Heart right ventricle (tissue), 16 donors: ENCODE measurements at regions of chr22 and their contacts with region 1.

Region 1: GRCh38 chr22:44080936-44081861 is 57.1 kb downstream of the PARVB start:
- DNase-seq: peak; percentile 68 to 73
- ATAC-seq: peak in 3 of 8 donors; percentile 30 to 51 (median 33)
- H3K4me3 ChIP-seq: no peak overlapping the region
- H3K27ac ChIP-seq: no peak overlapping the region
- H3K4me1 ChIP-seq: peaks cover 0 to 29% (median 4%) of the 10 kb centered on the region in 9 donors
- H3K27me3 ChIP-seq: no peaks in the 10 kb centered on the region
- CTCF ChIP-seq: peak; percentile 71 to 90 (median 88)

Region 2: DNA sequence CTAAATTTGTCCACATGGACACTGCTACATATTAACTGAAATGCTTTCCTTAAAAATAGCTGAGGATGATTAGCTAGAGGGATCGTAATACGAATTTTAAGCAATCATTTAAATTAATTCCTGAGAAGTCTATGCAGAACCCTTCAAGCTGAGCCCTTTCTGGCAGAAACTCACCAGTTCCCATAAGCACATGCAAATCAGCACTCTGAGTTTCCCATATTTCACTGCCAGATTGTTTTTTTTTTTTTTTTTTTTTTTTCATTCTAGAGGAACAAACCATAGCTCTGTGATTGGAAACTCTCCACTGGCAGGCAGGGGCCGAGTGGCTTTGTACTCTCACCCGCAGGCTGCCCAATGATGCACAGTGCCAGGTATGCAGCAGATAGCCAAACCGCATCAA is 414.7 kb before region 1 on chr22:
- intact Hi-C with region 1: no loop called
- DNase-seq: no peak
- ATAC-seq: no peak
- H3K4me3 ChIP-seq: no peak overlapping the region
- H3K27ac ChIP-seq: no peak overlapping the region
- H3K4me1 ChIP-seq: no peaks in the 10 kb centered on the region
- H3K27me3 ChIP-seq: no peaks in the 10 kb centered on the region
- CTCF ChIP-seq: no peak

Region 3: GRCh38 chr22:43848366-43849171 is 232.6 kb before region 1 on chr22:
- intact Hi-C with region 1: no loop called
- DNase-seq: no peak
- ATAC-seq: peak in 7 of 8 donors; percentile 43 to 76 (median 74)
- H3K4me3 ChIP-seq: no peak overlapping the region
- H3K27ac ChIP-seq: no peak overlapping the region
- H3K4me1 ChIP-seq: peaks cover 0 to 7% (median 0%) of the 10 kb centered on the region in 9 donors
- H3K27me3 ChIP-seq: peaks cover 0 to 49% (median 20%) of the 10 kb centered on the region in 7 donors
- CTCF ChIP-seq: peak in 8 of 9 donors; percentile 7 to 58 (median 48)

Region 4: GRCh38 chr22:43993027-43993760 is 88.0 kb before region 1 on chr22:
- intact Hi-C with region 1: loop called (anchors 1 to 5 kb)
- DNase-seq: peak; percentile 46 to 56
- ATAC-seq: peak; percentile 53 to 85 (median 74)
- H3K4me3 ChIP-seq: no peak overlapping the region
- H3K27ac ChIP-seq: no peak overlapping the region
- H3K4me1 ChIP-seq: peaks cover 0 to 33% (median 18%) of the 10 kb centered on the region in 9 donors
- H3K27me3 ChIP-seq: no peaks in the 10 kb centered on the region
- CTCF ChIP-seq: peak in 8 of 9 donors; percentile 93 to 98 (median 96)

Region 5: DNA sequence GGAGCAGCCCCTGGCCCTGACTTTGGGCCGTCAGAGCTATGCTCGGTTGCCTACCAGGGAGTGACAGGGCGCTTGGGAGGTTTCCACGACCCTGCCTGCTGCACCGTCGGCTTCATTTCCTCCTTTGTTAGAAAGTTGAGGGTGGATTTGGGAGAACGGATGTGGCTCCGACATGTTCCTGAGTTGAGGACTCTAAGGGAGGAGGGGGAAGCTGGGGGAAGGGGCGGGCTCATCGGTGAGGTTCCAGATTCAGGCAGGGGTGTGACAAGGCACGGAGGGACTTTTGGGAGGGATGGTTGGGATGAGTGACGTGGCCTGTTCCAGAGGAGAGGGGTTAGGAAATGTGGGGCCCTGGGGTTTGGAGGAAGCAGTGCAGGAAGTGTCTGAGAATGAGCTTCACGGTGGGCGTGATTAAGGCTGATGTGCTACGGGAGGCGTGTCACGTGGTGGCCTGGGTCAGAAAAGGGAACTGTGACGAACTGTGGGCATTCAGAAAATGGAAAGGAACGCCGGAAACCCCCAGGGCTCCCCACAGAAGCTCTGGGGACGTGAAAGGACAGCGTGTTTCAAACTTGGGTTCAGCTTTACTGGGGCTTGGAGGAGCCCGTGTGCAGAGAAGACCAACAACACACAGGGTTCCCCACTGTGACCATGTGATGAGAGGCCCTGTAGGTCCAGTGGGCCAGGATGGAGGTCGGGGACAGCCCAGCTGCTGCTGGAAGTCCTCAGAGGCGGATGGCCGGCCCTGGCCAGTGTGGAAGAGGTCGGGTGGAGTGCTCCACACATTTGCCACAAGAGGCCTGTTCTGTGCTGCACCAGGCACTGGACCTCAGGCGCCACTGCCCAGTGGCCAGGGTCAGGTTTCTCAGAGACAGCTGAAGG is 54.3 kb before region 1 on chr22:
- intact Hi-C with region 1: loop called in 3 of 10 experiments (anchors 2 to 10 kb)
- DNase-seq: peak; percentile 72 to 88
- ATAC-seq: peak; percentile 52 to 87 (median 74)
- H3K4me3 ChIP-seq: peak overlapping the region in 9 of 10 donors; percentile 16 to 80 (median 66)
- H3K27ac ChIP-seq: peak overlapping the region; percentile 93 to 98 (median 95)
- H3K4me1 ChIP-seq: peaks cover 16 to 91% (median 86%) of the 10 kb centered on the region in 9 donors
- H3K27me3 ChIP-seq: no peaks in the 10 kb centered on the region
- CTCF ChIP-seq: no peak

Region 6: GRCh38 chr22:44497218-44497904 is 416.2 kb after region 1 on chr22:
- intact Hi-C with region 1: loop called in 1 of 10 experiments (anchors 10 kb)
- DNase-seq: peak in 1 of 2 donors; percentile 11
- ATAC-seq: peak in 2 of 8 donors; percentile 3 to 22
- H3K4me3 ChIP-seq: peak overlapping the region; percentile 29 to 95 (median 77)
- H3K27ac ChIP-seq: peak overlapping the region; percentile 11 to 91 (median 82)
- H3K4me1 ChIP-seq: peaks cover 3 to 29% (median 19%) of the 10 kb centered on the region in 9 donors
- H3K27me3 ChIP-seq: no peaks in the 10 kb centered on the region
- CTCF ChIP-seq: no peak

Region 7: GRCh38 chr22:44620129-44620840 is 539.1 kb after region 1 on chr22:
- intact Hi-C with region 1: loop called in 9 of 10 experiments (anchors 2 to 10 kb)
- DNase-seq: peak; percentile 73 to 89
- ATAC-seq: peak; percentile 27 to 83 (median 79)
- H3K4me3 ChIP-seq: peak overlapping the region in 6 of 10 donors; percentile 2 to 32 (median 20)
- H3K27ac ChIP-seq: peak overlapping the region in 7 of 10 donors; percentile 2 to 68 (median 44)
- H3K4me1 ChIP-seq: peaks cover 0 to 18% (median 6%) of the 10 kb centered on the region in 9 donors
- H3K27me3 ChIP-seq: peaks cover 0 to 32% (median 21%) of the 10 kb centered on the region in 7 donors
- CTCF ChIP-seq: no peak

Region 8: DNA sequence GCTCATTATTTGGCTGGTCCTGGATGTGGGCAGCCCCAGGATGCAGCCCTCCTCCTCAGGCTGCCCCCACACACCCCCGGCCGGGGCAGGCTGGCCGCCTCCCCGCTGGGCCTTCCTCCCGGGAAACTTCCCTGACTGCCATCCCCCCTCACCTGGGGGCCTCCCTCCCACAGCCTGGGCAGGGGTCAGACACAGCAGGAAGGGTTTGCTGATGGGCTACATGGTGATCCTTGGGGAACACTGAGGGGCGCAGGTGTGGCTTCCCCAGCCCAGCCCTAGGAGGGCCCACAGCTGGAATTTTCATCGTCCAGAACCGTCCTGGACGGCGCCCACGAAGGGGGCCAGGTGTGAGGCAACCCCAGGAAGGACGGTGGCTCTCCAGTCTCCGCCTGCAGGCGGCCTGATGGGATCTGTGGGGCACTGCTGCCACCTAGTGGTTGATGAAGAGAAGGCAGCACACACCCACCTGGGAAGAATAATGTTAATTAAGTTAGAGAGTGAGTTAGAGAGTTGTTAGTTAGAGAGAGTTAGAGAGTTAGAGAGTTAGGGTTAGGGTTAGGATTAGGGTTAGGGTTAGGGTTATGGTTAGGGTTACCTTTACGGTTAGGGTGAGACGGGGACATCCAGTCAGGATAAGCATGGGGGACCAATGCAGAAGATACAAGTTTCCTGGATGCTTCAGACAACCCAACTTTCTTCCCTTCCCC is 544.9 kb after region 1 on chr22:
- intact Hi-C with region 1: loop called (anchors 2 to 10 kb)
- DNase-seq: peak; percentile 63 to 76
- ATAC-seq: peak; percentile 58 to 85 (median 70)
- H3K4me3 ChIP-seq: no peak overlapping the region
- H3K27ac ChIP-seq: no peak overlapping the region
- H3K4me1 ChIP-seq: peaks cover 0 to 5% (median 0%) of the 10 kb centered on the region in 9 donors
- H3K27me3 ChIP-seq: peaks cover 0 to 23% (median 5%) of the 10 kb centered on the region in 7 donors
- CTCF ChIP-seq: peak; percentile 94 to 98 (median 97)